CD4-positive, alpha-beta T cell (primary cell): ENCODE measurements at regions of chr17 and their contacts with region 1.

Region 1: GRCh38 chr17:18033442-18034099 is 5.4 kb downstream of the ATPAF2 start:
- DNase-seq: peak in 11 of 14 experiments; percentile 11 to 87 (median 46)
- ATAC-seq: peak; percentile 98
- H3K4me3 ChIP-seq: no peak overlapping the region
- H3K4me3 Mint-ChIP-seq: peak overlapping the region; percentile 77
- H3K27ac ChIP-seq: no peak overlapping the region
- H3K27ac Mint-ChIP-seq: peak overlapping the region; percentile 60
- H3K4me1 ChIP-seq: peaks cover 28% of the 10 kb centered on the region
- H3K4me1 Mint-ChIP-seq: peaks cover 30% of the 10 kb centered on the region
- H3K27me3 ChIP-seq: no peaks in the 10 kb centered on the region
- H3K27me3 Mint-ChIP-seq: no peaks in the 10 kb centered on the region
- CTCF ChIP-seq: peak; percentile 69

Region 2: GRCh38 chr17:17890773-17891759 is 142.5 kb before region 1 on chr17:
- CTCF ChIA-PET with region 1: interaction called, 13 read pairs
- POLR2A ChIA-PET with region 1: interaction called, 5 read pairs
- intact Hi-C with region 1: loop called (anchors 1 kb)
- DNase-seq: peak; percentile 9 to 71 (median 40)
- ATAC-seq: peak; percentile 89
- H3K4me3 ChIP-seq: no peak overlapping the region
- H3K4me3 Mint-ChIP-seq: no peak overlapping the region
- H3K27ac ChIP-seq: no peak overlapping the region
- H3K27ac Mint-ChIP-seq: no peak overlapping the region
- H3K4me1 ChIP-seq: peaks cover 2% of the 10 kb centered on the region
- H3K4me1 Mint-ChIP-seq: peaks cover 10% of the 10 kb centered on the region
- H3K27me3 ChIP-seq: no peaks in the 10 kb centered on the region
- H3K27me3 Mint-ChIP-seq: no peaks in the 10 kb centered on the region
- CTCF ChIP-seq: peak; percentile 47